ENCODE measurements at regions of chr10 and their contacts with region 1.

Region 1: GRCh38 chr10:84537447-84537931 is 209.1 kb downstream of the CCSER2 start:
- DNase-seq: peak; percentile 70
- H3K4me3 ChIP-seq: no peak overlapping the region
- H3K27ac ChIP-seq: no peak overlapping the region
- H3K4me1 ChIP-seq: peaks cover 13% of the 10 kb centered on the region
- H3K27me3 ChIP-seq: no peaks in the 10 kb centered on the region
- CTCF ChIP-seq: peak; percentile 57 to 66
- POLR2A ChIP-seq: no peak

Region 2: GRCh38 chr10:84147347-84147746 is 390.1 kb before region 1 on chr10:
- CTCF ChIA-PET with region 1: interaction called, 21 read pairs
- POLR2A ChIA-PET with region 1: no interaction called
- dilution Hi-C with region 1: no loop called
- intact Hi-C with region 1: loop called (anchors 2 kb)
- DNase-seq: no peak
- H3K4me3 ChIP-seq: no peak overlapping the region
- H3K27ac ChIP-seq: no peak overlapping the region
- H3K4me1 ChIP-seq: no peaks in the 10 kb centered on the region
- H3K27me3 ChIP-seq: no peaks in the 10 kb centered on the region
- CTCF ChIP-seq: no peak
- POLR2A ChIP-seq: no peak

Region 3: GRCh38 chr10:84328418-84329195 is 208.9 kb before region 1 on chr10 and contains the start of gene CCSER2:
- CTCF ChIA-PET with region 1: interaction called, 12 read pairs
- POLR2A ChIA-PET with region 1: no interaction called
- dilution Hi-C with region 1: no loop called
- intact Hi-C with region 1: no loop called
- DNase-seq: peak; percentile 92
- H3K4me3 ChIP-seq: peak within 1 kb of the TSS; percentile 52 to 90 (median 70)
- H3K27ac ChIP-seq: peak within 1 kb of the TSS; percentile 86
- H3K4me1 ChIP-seq: peaks cover 7% of the 10 kb centered on the region
- H3K27me3 ChIP-seq: no peaks in the 10 kb centered on the region
- CTCF ChIP-seq: peak in 1 of 2 donors; percentile 17
- POLR2A ChIP-seq: peak; percentile 74
- total RNA-seq, gene CCSER2: 49.3 and 50.8 TPM in 2 replicates

Region 4: DNA sequence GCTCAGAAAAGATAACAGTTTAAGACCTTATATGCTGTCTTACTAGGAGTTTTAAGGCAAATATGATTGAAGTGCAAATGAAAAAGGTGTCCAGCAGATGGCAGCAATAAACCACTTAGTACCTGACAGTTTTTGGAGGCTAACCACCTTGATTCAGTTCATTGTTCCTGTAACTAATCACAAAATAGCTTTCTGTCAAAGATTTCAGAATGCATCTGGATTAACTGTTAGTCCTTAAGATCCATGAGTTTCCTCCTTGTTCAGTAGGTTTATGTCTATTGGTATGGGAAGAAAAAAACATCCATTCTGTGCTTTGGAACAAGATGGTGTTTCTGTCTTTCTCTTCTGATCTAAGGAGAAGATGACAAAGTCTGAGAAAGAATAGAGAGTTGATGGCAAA is 162.5 kb before region 1 on chr10:
- CTCF ChIA-PET with region 1: interaction called, 231 read pairs
- POLR2A ChIA-PET with region 1: no interaction called
- dilution Hi-C with region 1: no loop called
- intact Hi-C with region 1: loop called (anchors 1 kb)
- DNase-seq: peak; percentile 81
- H3K4me3 ChIP-seq: no peak overlapping the region
- H3K27ac ChIP-seq: no peak overlapping the region
- H3K4me1 ChIP-seq: no peaks in the 10 kb centered on the region
- H3K27me3 ChIP-seq: no peaks in the 10 kb centered on the region
- CTCF ChIP-seq: peak; percentile 41 to 52
- POLR2A ChIP-seq: no peak

Region 5: GRCh38 chr10:84523526-84523925 is 14.0 kb before region 1 on chr10:
- CTCF ChIA-PET with region 1: interaction called, 12 read pairs
- POLR2A ChIA-PET with region 1: no interaction called
- dilution Hi-C with region 1: no loop called
- intact Hi-C with region 1: no loop called
- DNase-seq: peak; percentile 53
- H3K4me3 ChIP-seq: no peak overlapping the region
- H3K27ac ChIP-seq: no peak overlapping the region
- H3K4me1 ChIP-seq: peaks cover 12% of the 10 kb centered on the region
- H3K27me3 ChIP-seq: no peaks in the 10 kb centered on the region
- CTCF ChIP-seq: no peak
- POLR2A ChIP-seq: no peak

Region 6: DNA sequence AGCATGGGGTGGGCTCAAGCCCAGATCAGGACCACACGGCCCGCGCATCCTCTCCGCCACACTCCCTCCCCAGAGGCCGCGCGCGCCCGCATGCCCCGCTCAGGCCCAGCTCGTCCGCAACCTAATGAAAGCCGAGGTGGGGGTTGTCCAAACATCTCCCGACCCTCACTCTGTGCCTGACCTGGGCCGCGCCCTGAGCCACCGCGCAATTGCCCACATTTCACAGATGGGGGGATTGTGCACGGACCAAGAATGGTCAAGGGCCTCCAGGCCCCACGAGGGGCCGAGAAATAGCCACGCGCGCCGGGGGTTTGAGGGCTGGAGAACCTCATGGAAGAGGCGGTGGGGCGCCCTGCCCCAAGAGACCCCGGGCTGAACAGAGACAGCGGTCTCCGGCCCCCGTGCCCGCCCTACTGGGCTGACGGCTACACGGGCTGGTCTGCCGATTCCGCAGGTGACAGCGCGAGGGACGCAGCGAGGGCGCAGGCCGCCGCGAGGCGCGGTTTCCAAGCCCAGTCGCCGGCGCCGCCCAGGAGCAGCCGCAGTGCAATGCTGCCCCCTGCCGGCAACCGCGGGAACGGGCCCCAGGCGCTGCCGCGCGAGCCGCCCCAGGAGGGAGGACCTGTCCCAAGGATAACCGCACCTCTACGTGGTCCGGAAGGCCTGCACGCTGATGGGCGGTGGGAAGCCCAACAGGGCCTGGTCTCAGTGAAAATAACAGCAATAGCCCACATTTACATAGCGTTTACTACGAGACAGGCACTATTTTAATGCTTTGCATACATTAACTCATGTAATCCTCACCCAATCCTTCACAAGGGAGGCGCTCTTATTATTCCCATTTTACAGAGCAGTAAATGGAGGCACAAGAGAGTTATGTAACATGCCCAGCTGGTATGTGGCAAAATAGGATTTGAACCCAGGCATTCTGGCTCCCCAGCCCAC is 1839.6 kb after region 1 on chr10:
- CTCF ChIA-PET with region 1: interaction called, 58 read pairs
- POLR2A ChIA-PET with region 1: no interaction called
- dilution Hi-C with region 1: no loop called
- intact Hi-C with region 1: loop called (anchors 1 kb)
- DNase-seq: peak; percentile 56
- H3K4me3 ChIP-seq: no peak overlapping the region
- H3K27ac ChIP-seq: no peak overlapping the region
- H3K4me1 ChIP-seq: no peaks in the 10 kb centered on the region
- H3K27me3 ChIP-seq: peaks cover 10 to 11% of the 10 kb centered on the region in 2 experiments
- CTCF ChIP-seq: peak; percentile 96
- POLR2A ChIP-seq: no peak

Measured in endothelial cell of umbilical vein (primary cell).